Activated B cell treated with CpG ODN at 0.5 μM for 24 hours (primary cell): ENCODE measurements at regions of chr17 and their contacts with region 1.

Region 1: DNA sequence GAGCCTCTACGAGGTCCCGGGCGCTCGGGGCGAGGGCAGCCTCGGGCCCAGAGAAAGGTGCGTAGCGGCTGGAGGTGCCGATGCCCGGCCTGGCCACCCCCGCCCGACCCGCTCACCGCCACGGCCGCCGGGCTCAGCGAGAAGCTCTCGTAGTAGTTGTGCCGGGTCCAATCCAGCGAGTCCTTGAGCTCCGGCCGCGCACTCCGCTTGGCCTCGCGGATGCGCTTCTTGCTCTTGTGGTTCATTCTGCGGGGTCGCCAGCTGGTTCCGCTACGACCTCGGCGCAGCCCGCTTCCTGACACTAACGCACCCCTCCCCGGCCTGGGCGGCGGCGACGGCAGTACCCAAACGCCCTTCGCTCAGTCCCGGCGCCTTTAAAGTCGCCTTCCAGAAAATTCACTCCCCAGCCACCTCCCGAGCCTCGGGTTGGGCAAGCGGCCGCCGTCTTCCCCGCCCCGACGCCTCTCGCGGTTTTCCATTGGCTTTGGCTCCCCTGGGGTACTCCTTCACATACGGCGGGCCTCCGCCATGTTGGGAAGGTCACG is at the start of gene JMJD6:
- DNase-seq: peak; percentile 83
- ATAC-seq: peak; percentile 75
- H3K4me3 Mint-ChIP-seq: peak within 1 kb of the TSS; percentile 96
- H3K27ac Mint-ChIP-seq: peak within 1 kb of the TSS; percentile 95
- H3K4me1 Mint-ChIP-seq: peaks cover 48% of the 10 kb centered on the region
- H3K27me3 Mint-ChIP-seq: no peaks in the 10 kb centered on the region
- CTCF ChIP-seq: no peak
- total RNA-seq, gene JMJD6: 32.7 and 33.1 TPM in 2 replicates

Region 2: DNA sequence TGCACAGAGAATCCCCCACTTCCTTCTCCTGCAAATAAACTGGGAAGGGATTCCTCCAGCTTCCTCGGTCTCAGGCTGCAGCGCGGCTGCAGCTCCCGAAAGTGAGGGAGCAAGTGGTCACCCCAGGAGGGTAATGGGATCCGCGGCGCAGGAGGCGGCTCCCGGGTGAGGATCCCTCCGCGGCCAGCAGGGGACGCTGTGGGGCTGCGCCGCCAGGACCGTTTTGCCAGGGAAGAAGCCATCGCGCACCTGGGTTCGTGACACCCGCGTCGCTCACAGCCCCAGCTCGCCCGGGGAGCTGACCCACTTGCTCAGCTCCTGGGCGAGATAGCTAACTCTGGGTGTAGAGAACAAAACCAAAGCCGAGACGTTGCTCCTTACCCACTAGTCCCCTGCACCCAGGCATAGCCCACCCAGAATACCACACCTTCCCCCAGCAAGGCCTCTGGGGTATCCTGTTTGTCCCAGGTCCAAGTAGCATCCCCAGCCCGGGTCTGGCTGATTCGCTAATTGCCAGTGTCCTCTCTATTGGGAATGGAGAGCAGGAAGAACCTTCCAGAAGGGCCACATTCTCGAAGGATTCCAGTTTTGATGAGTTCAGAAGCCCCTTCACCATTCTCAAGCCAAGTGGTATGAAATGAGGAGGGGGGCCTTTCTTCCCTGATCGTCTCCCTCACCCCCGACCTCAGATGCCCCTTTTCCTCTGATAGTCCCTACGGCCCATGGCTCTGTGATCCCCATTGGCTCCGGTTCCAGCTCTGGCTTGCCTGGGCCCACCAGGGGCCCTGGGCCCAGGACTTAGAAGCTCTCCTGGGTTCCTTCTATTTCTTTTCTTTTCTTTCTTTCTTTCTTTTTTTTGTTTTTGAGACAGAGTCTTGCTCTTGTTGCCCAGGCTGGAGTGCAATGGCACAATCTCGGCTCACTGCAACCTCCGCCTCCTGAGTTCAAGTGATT is 202.9 kb before region 1 on chr17:
- CTCF ChIA-PET with region 1: interaction called, 3 read pairs
- POLR2A ChIA-PET with region 1: interaction called, 17 read pairs
- intact Hi-C with region 1: no loop called
- DNase-seq: peak; percentile 82
- ATAC-seq: peak; percentile 45
- H3K4me3 Mint-ChIP-seq: peak overlapping the region; percentile 44
- H3K27ac Mint-ChIP-seq: peak overlapping the region; percentile 41
- H3K4me1 Mint-ChIP-seq: peaks cover 29% of the 10 kb centered on the region
- H3K27me3 Mint-ChIP-seq: peaks cover 3% of the 10 kb centered on the region
- CTCF ChIP-seq: peak; percentile 91

Region 3: DNA sequence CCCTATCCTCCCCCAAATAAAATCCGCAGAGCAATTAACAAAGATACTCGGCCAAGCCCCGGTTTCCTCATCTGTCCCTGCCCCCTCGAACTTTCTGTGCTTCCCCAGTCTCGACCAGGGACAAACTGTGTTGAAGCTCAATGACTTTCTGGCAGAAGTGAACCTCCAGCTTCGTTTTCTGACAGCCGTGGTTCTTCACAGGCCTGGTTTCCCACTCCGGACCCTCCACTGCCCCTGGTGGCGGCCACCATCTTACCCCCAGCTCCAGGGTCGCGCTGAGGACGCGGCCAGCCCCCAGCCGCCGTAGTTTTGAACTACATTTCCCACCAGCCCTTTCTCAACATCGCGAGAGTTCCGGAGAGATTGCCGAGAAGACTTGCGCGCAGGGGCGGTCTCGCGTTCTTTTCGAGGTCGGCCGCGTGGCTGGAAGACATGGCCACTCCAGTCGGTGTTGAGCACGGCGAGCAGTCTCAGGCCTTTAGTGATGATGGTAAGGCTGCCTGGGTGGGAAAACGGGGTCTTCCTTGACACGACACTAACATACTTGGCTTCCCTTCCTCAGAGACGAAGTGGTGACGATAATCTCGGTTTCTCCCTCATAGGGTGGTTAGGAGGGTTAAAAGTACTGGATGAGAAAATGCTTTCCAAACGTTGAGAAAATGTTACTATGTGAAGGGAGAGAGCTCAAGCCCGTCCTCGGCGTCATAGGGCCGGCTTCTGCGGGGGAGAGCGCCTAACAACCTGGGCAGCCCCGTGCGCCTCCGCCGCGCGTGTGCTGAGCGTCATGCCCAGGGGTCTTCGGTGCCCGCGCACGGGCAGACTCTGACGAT is 168.7 kb before region 1 on chr17:
- CTCF ChIA-PET with region 1: no interaction called
- POLR2A ChIA-PET with region 1: interaction called, 4 read pairs
- intact Hi-C with region 1: loop called (anchors 1 kb)
- DNase-seq: peak; percentile 87
- ATAC-seq: peak; percentile 90
- H3K4me3 Mint-ChIP-seq: peak overlapping the region; percentile 95
- H3K27ac Mint-ChIP-seq: peak overlapping the region; percentile 98
- H3K4me1 Mint-ChIP-seq: peaks cover 68% of the 10 kb centered on the region
- H3K27me3 Mint-ChIP-seq: no peaks in the 10 kb centered on the region
- CTCF ChIP-seq: no peak

Region 4: GRCh38 chr17:76714822-76715495 is 11.3 kb before region 1 on chr17:
- CTCF ChIA-PET with region 1: interaction called, 4 read pairs
- POLR2A ChIA-PET with region 1: interaction called, 33 read pairs
- intact Hi-C with region 1: loop called (anchors 1 kb)
- DNase-seq: peak; percentile 56
- ATAC-seq: peak; percentile 29
- H3K4me3 Mint-ChIP-seq: peak overlapping the region; percentile 39
- H3K27ac Mint-ChIP-seq: peak overlapping the region; percentile 78
- H3K4me1 Mint-ChIP-seq: peaks cover 27% of the 10 kb centered on the region
- H3K27me3 Mint-ChIP-seq: no peaks in the 10 kb centered on the region
- CTCF ChIP-seq: peak; percentile 76

Region 5: GRCh38 chr17:76753061-76753961 is 27.0 kb after region 1 on chr17:
- CTCF ChIA-PET with region 1: no interaction called
- POLR2A ChIA-PET with region 1: no interaction called
- intact Hi-C with region 1: no loop called
- DNase-seq: no peak
- ATAC-seq: no peak
- H3K4me3 Mint-ChIP-seq: no peak overlapping the region
- H3K27ac Mint-ChIP-seq: no peak overlapping the region
- H3K4me1 Mint-ChIP-seq: peaks cover 11% of the 10 kb centered on the region
- H3K27me3 Mint-ChIP-seq: no peaks in the 10 kb centered on the region
- CTCF ChIP-seq: no peak

Region 6: DNA sequence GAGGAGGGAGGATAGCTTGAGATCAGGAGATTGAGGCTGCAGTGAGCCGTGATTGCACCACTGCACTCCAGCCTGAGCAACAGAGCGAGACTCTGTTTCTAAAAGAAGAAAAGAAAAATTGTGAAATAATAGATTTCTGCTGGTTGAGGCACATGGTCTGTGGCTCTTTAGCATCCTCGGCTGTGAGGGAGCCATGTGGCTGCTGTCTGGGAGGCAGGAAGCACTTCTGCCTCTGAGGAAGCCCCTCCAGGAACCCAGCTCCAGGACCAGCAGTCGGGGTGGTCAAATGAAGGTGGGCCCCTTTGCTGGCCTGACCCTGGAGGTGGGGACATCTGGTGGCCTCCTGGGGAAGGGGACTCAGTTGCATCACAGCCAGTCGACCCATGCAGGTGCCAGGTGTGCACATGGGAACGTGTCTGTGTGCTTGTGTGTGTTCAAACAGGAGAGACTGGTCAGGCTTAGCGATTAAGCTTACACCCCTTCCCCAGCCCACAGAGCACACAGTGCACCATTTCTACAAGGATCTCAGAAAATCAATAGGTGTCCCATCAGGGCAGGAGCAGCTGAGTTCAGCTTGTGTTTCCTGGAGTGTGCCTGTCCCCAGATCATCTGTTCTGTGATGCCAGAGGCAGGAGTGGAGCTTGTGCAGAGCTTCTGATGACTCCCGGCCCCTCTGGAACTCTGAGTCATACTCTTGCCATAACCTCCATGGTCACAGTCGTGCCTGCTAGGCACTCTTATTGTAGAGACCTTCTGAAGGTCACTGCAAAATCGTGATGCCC is 117.6 kb after region 1 on chr17:
- CTCF ChIA-PET with region 1: no interaction called
- POLR2A ChIA-PET with region 1: no interaction called
- intact Hi-C with region 1: loop called (anchors 1 kb)
- DNase-seq: no peak
- ATAC-seq: no peak
- H3K4me3 Mint-ChIP-seq: no peak overlapping the region
- H3K27ac Mint-ChIP-seq: no peak overlapping the region
- H3K4me1 Mint-ChIP-seq: peaks cover 23% of the 10 kb centered on the region
- H3K27me3 Mint-ChIP-seq: peaks cover 43% of the 10 kb centered on the region
- CTCF ChIP-seq: no peak